ENCODE measurements at regions of chr6 and their contacts with region 1.

Region 1: GRCh38 chr6:106097411-106098231 is 11.5 kb downstream of the PRDM1 start:
- DNase-seq: no peak
- H3K4me3 ChIP-seq: peak overlapping the region in 56 of 59 donors; percentile 3 to 64 (median 40)
- H3K27ac ChIP-seq: peak overlapping the region in 52 of 59 donors; percentile 7 to 84 (median 62)
- H3K27me3 ChIP-seq: peaks cover 0 to 82% (median 39%) of the 10 kb centered on the region in 45 donors
- CTCF ChIP-seq: no peak

Region 2: GRCh38 chr6:105733565-105734162 is 364.0 kb before region 1 on chr6:
- intact Hi-C with region 1: loop called in 1 of 2 experiments (anchors 10 kb)
- DNase-seq: no peak
- H3K4me3 ChIP-seq: no peak overlapping the region
- H3K27ac ChIP-seq: no peak overlapping the region
- H3K27me3 ChIP-seq: no peaks in the 10 kb centered on the region
- CTCF ChIP-seq: peak; percentile 29 to 77 (median 58)

Region 3: GRCh38 chr6:106223300-106223930 is 125.8 kb after region 1 on chr6:
- intact Hi-C with region 1: no loop called
- DNase-seq: peak in 6 of 10 donors; percentile 37 to 76 (median 52)
- H3K4me3 ChIP-seq: no peak overlapping the region
- H3K27ac ChIP-seq: no peak overlapping the region
- H3K27me3 ChIP-seq: no peaks in the 10 kb centered on the region
- CTCF ChIP-seq: peak; percentile 45 to 84 (median 69)

Region 4: DNA sequence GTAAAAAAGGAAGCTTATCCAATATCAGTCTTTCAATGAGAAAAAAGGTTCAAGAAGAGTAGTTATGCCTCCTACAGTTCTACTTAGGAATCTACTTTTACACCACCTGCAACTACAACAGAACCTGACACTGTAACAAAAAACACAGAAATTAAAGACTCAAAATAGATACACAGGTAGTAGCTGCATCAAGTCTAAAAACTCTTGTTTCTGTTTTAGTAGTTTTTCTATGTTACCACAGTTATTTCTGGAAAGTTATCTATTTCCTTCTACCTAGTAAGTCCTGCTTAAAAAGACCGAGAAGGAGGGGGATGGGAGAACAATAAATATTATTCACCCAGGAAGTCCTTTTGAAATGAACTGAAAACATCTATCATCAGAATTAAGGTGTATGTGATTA is 175.5 kb after region 1 on chr6:
- intact Hi-C with region 1: no loop called
- DNase-seq: no peak
- H3K4me3 ChIP-seq: no peak overlapping the region
- H3K27ac ChIP-seq: no peak overlapping the region
- H3K27me3 ChIP-seq: no peaks in the 10 kb centered on the region
- CTCF ChIP-seq: no peak

Region 5: GRCh38 chr6:106300944-106301343 is 203.3 kb after region 1 on chr6:
- intact Hi-C with region 1: loop called in 1 of 2 experiments (anchors 10 kb)
- DNase-seq: no peak
- H3K4me3 ChIP-seq: no peak overlapping the region
- H3K27ac ChIP-seq: no peak overlapping the region
- H3K27me3 ChIP-seq: no peaks in the 10 kb centered on the region
- CTCF ChIP-seq: peak; percentile 27 to 81 (median 58)

Region 6: GRCh38 chr6:106783631-106784566 is 686.3 kb after region 1 on chr6:
- intact Hi-C with region 1: no loop called
- DNase-seq: no peak
- H3K4me3 ChIP-seq: no peak overlapping the region
- H3K27ac ChIP-seq: no peak overlapping the region
- H3K27me3 ChIP-seq: peaks cover 0 to 21% (median 0%) of the 10 kb centered on the region in 45 donors
- CTCF ChIP-seq: no peak